ENCODE measurements at regions of chr21 and their contacts with region 1.

Region 1: DNA sequence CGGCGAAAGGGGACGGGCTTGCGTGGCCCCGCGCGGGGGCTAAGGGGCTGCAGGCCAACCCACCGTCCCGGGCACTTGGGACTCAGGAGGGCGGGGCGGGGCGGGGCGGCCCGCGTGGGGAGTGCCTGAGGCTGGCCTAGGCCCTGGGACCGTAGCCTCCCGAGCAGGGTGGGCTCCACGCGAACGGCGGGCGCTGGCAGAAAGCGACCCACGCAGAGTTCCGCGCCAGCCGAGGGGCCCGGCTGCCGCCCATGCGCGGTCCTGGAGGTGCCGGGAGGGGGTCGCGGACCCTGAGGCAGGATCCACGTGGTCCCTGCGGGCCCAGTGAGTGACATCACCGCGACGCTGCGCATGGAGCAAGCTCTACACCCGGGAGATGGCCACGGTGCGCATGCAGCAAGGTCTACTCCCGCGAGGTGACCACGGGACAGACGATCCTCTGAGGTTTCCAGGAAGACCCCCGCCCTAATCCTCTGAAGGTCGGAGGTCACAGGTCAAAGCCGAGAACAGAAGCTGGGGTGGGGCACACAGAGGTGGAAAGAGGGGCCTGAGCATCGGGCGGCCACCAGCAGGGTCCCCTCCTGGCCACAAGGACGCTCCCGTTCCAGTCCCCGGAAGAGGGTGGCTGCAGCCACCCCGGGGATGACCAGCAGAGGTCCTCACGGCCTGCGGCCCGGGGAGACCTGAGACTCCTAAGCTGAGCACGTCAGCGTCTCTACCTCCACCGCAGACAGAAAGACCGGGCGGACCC is 13.5 kb upstream of the SLC19A1 start:
- DNase-seq: peak; percentile 44
- H3K4me3 ChIP-seq: peak overlapping the region; percentile 60
- H3K27ac ChIP-seq: peak overlapping the region; percentile 61
- H3K27me3 ChIP-seq: peaks cover 11% of the 10 kb centered on the region
- CTCF ChIP-seq: peak; percentile 85

Region 2: GRCh38 chr21:45517249-45518065 is 38.3 kb before region 1 on chr21:
- CTCF ChIA-PET with region 1: no interaction called
- POLR2A ChIA-PET with region 1: no interaction called
- DNase-seq: no peak
- H3K4me3 ChIP-seq: no peak overlapping the region
- H3K27ac ChIP-seq: no peak overlapping the region
- H3K27me3 ChIP-seq: no peaks in the 10 kb centered on the region
- CTCF ChIP-seq: no peak

Region 3: GRCh38 chr21:45570826-45571601 is 15.3 kb after region 1 on chr21:
- CTCF ChIA-PET with region 1: interaction called, 13 read pairs
- POLR2A ChIA-PET with region 1: interaction called, 3 read pairs
- DNase-seq: no peak
- H3K4me3 ChIP-seq: no peak overlapping the region
- H3K27ac ChIP-seq: no peak overlapping the region
- H3K27me3 ChIP-seq: peaks cover 51% of the 10 kb centered on the region
- CTCF ChIP-seq: no peak

Region 4: DNA sequence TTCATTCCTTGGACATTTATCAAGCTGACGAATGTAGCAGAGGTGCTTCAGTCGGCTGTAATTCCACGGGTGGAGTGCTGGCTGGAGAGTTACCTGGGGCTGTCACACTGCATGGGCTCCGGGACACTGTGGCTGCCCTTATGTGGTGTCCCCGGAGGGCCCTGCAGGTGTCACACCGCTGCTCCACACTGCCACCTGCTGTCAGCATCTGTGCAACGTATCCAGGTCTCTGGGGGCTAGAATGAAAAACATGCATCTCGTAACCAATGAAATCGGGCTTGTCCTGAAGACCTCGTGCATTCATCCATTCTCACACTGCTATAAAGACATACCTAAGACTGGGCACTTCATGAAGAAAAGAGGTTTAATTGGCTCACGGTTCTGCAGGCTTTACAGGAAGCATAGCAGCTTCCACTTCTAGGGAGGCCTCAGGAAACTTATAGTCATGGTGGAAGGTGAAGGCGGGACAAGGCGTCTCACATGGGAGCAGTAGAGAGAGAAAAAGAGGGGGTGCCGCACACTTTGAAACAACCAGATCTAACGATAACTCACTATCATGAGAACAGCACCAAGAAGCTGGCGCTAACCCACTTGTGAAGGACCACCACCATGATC is 41.1 kb after region 1 on chr21:
- CTCF ChIA-PET with region 1: interaction called, 56 read pairs
- POLR2A ChIA-PET with region 1: no interaction called
- DNase-seq: no peak
- H3K4me3 ChIP-seq: no peak overlapping the region
- H3K27ac ChIP-seq: no peak overlapping the region
- H3K27me3 ChIP-seq: peaks cover 24% of the 10 kb centered on the region
- CTCF ChIP-seq: peak; percentile 88

Region 5: GRCh38 chr21:45603481-45603880 is 47.8 kb after region 1 on chr21:
- CTCF ChIA-PET with region 1: interaction called, 14 read pairs
- POLR2A ChIA-PET with region 1: no interaction called
- DNase-seq: no peak
- H3K4me3 ChIP-seq: no peak overlapping the region
- H3K27ac ChIP-seq: no peak overlapping the region
- H3K27me3 ChIP-seq: peaks cover 25% of the 10 kb centered on the region
- CTCF ChIP-seq: no peak

Region 6: GRCh38 chr21:45820171-45821091 is 264.7 kb after region 1 on chr21:
- CTCF ChIA-PET with region 1: interaction called, 44 read pairs
- POLR2A ChIA-PET with region 1: interaction called, 3 read pairs
- DNase-seq: peak; percentile 85
- H3K4me3 ChIP-seq: no peak overlapping the region
- H3K27ac ChIP-seq: no peak overlapping the region
- H3K27me3 ChIP-seq: peaks cover 2% of the 10 kb centered on the region
- CTCF ChIP-seq: peak; percentile 95

Region 7: DNA sequence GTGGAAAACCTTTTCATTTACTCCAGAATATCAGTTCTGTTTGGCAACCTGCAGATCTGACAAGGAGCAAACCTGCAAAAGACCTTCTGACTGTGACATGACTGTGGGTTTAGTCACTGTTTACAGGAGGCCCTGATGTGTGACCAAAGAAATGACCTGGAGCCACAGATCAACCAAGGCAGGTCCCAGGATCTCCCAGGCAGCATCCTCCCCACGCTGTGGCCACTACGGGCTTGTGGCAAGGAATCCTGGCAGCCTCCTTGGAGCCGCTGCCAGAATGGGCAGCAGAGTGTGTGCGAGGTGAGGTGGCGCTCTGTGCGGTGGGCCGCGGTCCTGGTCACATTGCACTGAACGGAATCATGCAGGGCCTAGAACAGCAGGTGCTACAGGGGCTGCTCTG is 713.7 kb after region 1 on chr21:
- CTCF ChIA-PET with region 1: no interaction called
- POLR2A ChIA-PET with region 1: no interaction called
- DNase-seq: no peak
- H3K4me3 ChIP-seq: no peak overlapping the region
- H3K27ac ChIP-seq: no peak overlapping the region
- H3K27me3 ChIP-seq: no peaks in the 10 kb centered on the region
- CTCF ChIP-seq: no peak

Measured in AG04450 (cell line).